Activated B cell treated with CpG ODN at 0.5 μM for 24 hours (primary cell): ENCODE measurements at regions of chr12 and their contacts with region 1.

Region 1: GRCh38 chr12:132000286-132000872 is 50.6 kb downstream of the EP400 start:
- DNase-seq: no peak
- ATAC-seq: no peak
- H3K4me3 Mint-ChIP-seq: no peak overlapping the region
- H3K27ac Mint-ChIP-seq: no peak overlapping the region
- H3K4me1 Mint-ChIP-seq: no peaks in the 10 kb centered on the region
- H3K27me3 Mint-ChIP-seq: no peaks in the 10 kb centered on the region
- CTCF ChIP-seq: no peak

Region 2: DNA sequence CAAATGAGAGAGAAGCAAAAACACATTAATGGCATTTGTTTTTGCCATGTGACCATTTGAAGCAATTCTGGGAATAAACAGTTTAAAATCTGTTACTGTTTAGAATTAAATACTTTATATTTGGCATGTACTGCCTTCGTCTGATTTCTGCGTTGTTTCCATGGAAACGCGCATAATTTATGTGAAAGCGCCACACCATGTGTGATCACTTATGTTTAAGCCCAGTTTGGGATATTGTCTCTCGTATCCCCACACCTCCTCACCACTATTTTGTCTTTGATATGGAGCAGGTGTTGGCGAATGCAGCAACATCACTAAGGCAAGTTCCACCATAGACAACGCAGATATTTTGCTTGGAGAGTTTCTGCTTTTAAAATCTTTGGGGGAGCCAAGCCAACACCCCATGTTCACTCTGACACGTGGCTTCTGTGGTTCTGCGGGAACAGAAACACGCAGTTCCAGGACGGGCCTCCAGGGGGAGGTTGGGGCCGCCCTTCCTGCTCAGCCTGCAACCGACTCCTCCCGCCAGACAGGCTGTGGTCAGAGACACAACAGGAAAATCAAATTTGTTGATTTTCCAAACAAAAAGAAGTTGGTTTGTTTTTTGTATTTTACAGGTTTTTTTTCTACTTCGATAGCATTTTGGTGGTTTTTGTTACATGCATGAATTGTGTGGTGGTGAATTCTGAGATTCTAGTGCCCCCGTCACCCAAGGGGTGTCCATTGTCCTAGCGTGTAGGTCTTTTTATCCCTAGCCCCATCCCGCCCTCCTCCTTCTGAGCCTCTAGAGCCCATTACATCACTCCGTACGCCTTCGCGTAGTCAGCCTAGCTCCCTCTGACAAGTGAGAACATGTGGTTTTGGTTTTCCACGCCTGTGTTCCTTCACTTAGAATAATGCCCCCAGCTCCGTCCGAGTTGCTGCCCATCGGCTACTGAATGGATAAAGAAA is 391.4 kb before region 1 on chr12:
- CTCF ChIA-PET with region 1: no interaction called
- POLR2A ChIA-PET with region 1: no interaction called
- intact Hi-C with region 1: loop called (anchors 2 kb)
- DNase-seq: peak; percentile 26
- ATAC-seq: peak; percentile 54
- H3K4me3 Mint-ChIP-seq: no peak overlapping the region
- H3K27ac Mint-ChIP-seq: no peak overlapping the region
- H3K4me1 Mint-ChIP-seq: peaks cover 10% of the 10 kb centered on the region
- H3K27me3 Mint-ChIP-seq: peaks cover 35% of the 10 kb centered on the region
- CTCF ChIP-seq: no peak